Activated B cell treated with CpG ODN at 0.5 μM for 24 hours (primary cell): ENCODE measurements at regions of chr5 and their contacts with region 1.

Region 1: GRCh38 chr5:79612667-79613198 is 492 bp downstream of the TENT2 start:
- DNase-seq: no peak
- ATAC-seq: peak; percentile 16
- H3K4me3 Mint-ChIP-seq: peak overlapping the region; percentile 99
- H3K27ac Mint-ChIP-seq: peak overlapping the region; percentile 98
- H3K4me1 Mint-ChIP-seq: peaks cover 34% of the 10 kb centered on the region
- H3K27me3 Mint-ChIP-seq: peaks cover 2% of the 10 kb centered on the region
- CTCF ChIP-seq: no peak

Region 2: GRCh38 chr5:79235634-79236363 is 376.9 kb before region 1 on chr5 and contains the start of gene JMY:
- CTCF ChIA-PET with region 1: no interaction called
- POLR2A ChIA-PET with region 1: interaction called, 4 read pairs
- intact Hi-C with region 1: loop called (anchors 5 kb)
- DNase-seq: peak; percentile 68
- ATAC-seq: peak; percentile 79
- H3K4me3 Mint-ChIP-seq: peak within 1 kb of the TSS; percentile 91
- H3K27ac Mint-ChIP-seq: peak within 1 kb of the TSS; percentile 94
- H3K4me1 Mint-ChIP-seq: peaks cover 34% of the 10 kb centered on the region
- H3K27me3 Mint-ChIP-seq: no peaks in the 10 kb centered on the region
- CTCF ChIP-seq: no peak
- total RNA-seq, gene JMY: 6.4 and 6.9 TPM in 2 replicates

Region 3: GRCh38 chr5:79990598-79991507 is 378.1 kb after region 1 on chr5 and contains the start of gene MTX3:
- CTCF ChIA-PET with region 1: no interaction called
- POLR2A ChIA-PET with region 1: no interaction called
- intact Hi-C with region 1: loop called (anchors 1 kb)
- DNase-seq: peak; percentile 74
- ATAC-seq: peak; percentile 95
- H3K4me3 Mint-ChIP-seq: peak within 1 kb of the TSS; percentile 88
- H3K27ac Mint-ChIP-seq: peak within 1 kb of the TSS; percentile 84
- H3K4me1 Mint-ChIP-seq: peaks cover 23% of the 10 kb centered on the region
- H3K27me3 Mint-ChIP-seq: peaks cover 2% of the 10 kb centered on the region
- CTCF ChIP-seq: no peak
- total RNA-seq, gene MTX3: 20.0 and 21.4 TPM in 2 replicates